Prostate gland (tissue), 2 donors: ENCODE measurements at regions of chr20 and their contacts with region 1.

Region 1: DNA sequence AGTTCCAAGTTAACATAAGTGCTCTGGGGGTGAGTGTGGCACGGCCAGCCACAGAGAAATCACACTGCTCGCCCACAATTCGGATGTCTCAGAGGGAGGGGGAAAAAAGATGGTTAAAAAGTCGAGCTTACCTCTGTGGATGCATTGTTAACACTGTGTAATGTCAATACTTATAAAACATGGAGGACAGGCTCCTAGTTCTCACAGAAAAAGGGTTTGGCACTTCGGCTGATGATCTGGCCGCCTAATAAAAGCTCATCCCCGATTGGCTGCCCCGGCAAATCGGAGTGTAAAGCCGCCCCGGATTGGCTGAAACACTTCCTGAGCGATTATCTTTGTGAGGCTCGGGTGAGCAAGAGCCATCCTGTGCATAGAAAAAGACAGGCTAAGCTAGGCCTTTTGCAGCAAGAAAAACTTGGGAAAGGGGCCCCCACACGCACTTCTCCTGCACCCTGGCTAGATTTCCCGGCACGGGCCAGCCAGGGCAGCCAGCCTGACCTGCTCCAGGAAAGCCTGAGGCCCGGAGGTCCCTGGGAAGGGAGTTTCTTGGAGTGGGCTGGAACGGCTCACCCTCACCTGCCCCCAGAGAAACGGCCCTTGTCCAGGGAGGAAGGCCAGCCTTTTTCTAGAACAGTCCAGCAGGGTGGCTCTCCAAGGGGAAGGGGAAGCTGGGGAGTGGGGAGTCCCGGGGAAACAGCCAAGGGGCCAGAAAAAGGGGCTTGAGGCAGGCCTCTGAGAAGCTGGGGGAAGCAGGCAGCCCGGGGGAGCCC is at the start of gene ZMYND8:
- DNase-seq: peak; percentile 94
- H3K4me3 ChIP-seq: no peak within 1 kb of the TSS
- H3K27ac ChIP-seq: peak within 1 kb of the TSS; percentile 99
- H3K4me1 ChIP-seq: peaks cover 75% of the 10 kb centered on the region
- H3K27me3 ChIP-seq: no peaks in the 10 kb centered on the region
- CTCF ChIP-seq: no peak
- POLR2A ChIP-seq: no peak
- total RNA-seq, gene ZMYND8: 19.9 to 70.9 TPM

Region 2: DNA sequence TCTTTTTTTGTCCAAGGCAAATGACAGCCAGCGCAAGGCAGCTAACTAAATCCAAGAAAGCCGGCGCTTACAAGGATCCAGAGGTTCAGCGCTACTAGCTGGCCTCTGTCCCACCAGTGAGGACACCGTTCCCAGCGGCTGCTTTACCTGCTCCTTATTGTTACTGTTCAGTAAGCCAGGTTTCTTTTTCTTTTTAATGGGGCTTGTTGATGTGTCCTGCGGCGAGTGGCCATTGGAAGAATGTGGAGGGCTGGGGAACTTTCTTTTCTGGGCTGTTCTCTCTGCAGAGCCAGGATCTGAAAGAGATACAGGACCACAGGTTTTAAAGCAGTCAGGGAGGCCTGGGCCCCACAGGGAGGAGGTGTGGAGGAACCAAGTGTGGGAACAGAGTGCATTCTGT is 46.8 kb before region 1 on chr20:
- intact Hi-C with region 1: loop called (anchors 2 kb)
- DNase-seq: peak; percentile 57
- H3K4me3 ChIP-seq: no peak overlapping the region
- H3K27ac ChIP-seq: peak overlapping the region; percentile 57 to 67
- H3K4me1 ChIP-seq: peaks cover 1% of the 10 kb centered on the region
- H3K27me3 ChIP-seq: no peaks in the 10 kb centered on the region
- CTCF ChIP-seq: no peak
- POLR2A ChIP-seq: no peak

Region 3: DNA sequence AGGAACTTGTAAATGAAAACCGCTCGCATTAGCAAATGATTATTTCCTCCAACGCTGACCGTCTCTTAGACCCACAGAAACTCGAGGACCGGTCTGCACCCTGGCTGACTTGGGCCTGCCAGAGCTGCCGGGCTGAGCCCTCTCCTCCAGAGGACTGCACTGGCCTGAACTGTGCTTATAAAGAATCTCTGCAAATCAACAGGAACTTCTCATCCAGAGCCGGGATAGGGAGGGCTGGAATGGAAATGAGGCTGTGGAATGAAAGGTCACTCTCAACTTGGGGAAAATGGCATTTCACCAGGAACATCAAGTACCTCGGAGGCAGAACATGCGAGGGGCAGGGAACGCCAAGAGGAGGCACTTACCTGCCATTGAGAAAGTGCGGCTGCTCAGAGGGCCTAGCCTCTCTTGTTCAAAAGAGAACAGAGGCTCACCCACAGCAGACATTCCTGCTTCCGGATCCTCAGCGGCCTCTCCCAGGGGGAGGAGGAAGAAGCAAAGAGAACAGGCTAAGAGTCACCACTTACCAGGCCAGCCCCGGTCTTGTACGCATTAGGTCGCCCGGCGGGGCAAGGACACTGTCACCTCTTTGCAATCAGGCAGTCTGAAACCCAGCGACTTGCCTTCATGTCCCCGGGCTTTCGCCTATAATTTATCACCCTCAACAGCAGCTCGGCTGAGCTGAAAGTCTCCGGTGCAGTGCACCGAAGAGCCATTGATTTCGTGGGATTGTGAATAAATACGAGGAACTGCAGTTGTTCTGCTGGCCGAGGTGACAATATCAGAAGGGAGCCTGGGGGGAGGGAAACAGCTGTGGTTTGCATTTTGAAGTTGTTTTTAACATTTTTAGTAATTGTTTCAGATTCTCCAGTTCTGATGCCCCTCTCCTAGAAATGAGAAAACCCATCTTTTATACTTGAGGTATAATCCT is 37.9 kb before region 1 on chr20:
- intact Hi-C with region 1: loop called (anchors 2 kb)
- DNase-seq: peak; percentile 77
- H3K4me3 ChIP-seq: peak overlapping the region in 1 of 2 donors; percentile 9
- H3K27ac ChIP-seq: peak overlapping the region; percentile 91 to 96
- H3K4me1 ChIP-seq: peaks cover 45% of the 10 kb centered on the region
- H3K27me3 ChIP-seq: no peaks in the 10 kb centered on the region
- CTCF ChIP-seq: no peak
- POLR2A ChIP-seq: peak; percentile 17

Region 4: DNA sequence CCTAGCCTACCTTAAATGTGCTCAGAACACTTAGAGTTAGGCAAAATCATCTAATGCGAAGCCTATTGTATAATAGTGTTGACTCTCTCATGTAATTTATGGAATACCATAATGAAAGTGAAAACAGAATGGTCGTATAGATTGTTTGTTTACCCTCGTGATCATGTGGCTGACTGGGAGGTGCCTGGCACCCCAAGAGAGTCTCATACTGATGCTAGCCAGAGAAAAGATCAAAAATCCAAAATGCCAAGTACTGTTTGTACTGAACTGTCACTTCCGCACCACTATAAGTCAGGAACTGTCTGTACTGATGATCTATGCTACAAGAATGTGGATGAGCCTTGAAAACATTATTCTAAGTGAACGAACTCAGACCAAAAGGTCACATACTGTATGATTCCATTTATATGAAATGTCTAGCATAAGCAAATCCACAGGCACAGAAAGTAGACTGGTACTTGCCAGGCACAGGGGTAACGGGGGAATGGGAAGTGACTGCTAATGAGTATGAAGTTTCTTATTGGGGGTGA is 22.6 kb before region 1 on chr20:
- intact Hi-C with region 1: loop called (anchors 2 kb)
- DNase-seq: peak; percentile 74
- H3K4me3 ChIP-seq: peak overlapping the region in 1 of 2 donors; percentile 12
- H3K27ac ChIP-seq: peak overlapping the region; percentile 77 to 87
- H3K4me1 ChIP-seq: no peaks in the 10 kb centered on the region
- H3K27me3 ChIP-seq: no peaks in the 10 kb centered on the region
- CTCF ChIP-seq: no peak
- POLR2A ChIP-seq: peak; percentile 18